Right cardiac atrium (tissue), 5 donors: ENCODE measurements at regions of chr18 and their contacts with region 1.

Region 1: GRCh38 chr18:35513181-35513936 is 15.6 kb upstream of the INO80C start:
- DNase-seq: peak; percentile 73 to 86 (median 77)
- ATAC-seq: peak; percentile 76 to 79
- H3K4me3 ChIP-seq: no peak overlapping the region
- H3K27ac ChIP-seq: no peak overlapping the region
- H3K4me1 ChIP-seq: peaks cover 4% of the 10 kb centered on the region
- H3K27me3 ChIP-seq: no peaks in the 10 kb centered on the region

Region 2: GRCh38 chr18:35355140-35355618 is 158.2 kb before region 1 on chr18:
- intact Hi-C with region 1: no loop called
- DNase-seq: peak; percentile 74 to 88 (median 81)
- ATAC-seq: peak; percentile 99
- H3K4me3 ChIP-seq: peak overlapping the region; percentile 27
- H3K27ac ChIP-seq: no peak overlapping the region
- H3K4me1 ChIP-seq: no peaks in the 10 kb centered on the region
- H3K27me3 ChIP-seq: no peaks in the 10 kb centered on the region

Region 3: DNA sequence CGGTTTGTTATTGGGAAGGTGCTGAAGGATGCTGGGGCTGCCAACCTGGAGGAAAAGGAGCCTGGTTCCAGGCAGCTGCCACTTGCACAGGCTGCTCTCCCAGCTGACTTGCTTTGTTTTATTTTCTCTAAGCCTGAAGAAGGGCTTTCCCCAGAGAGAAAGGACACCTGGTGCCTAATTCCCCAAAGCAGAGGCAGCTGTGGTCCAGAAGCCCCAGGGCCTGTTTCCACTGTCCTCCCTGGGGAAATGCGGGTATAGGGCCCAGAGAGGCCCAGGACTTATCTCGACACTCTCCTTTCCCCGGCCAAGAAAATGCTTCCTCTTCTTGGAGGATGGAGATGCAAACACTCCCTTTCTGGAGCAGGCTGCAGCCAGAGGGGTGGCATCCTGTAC is 45.7 kb before region 1 on chr18:
- intact Hi-C with region 1: loop called in 1 of 4 experiments (anchors 10 kb)
- DNase-seq: no peak
- ATAC-seq: no peak
- H3K4me3 ChIP-seq: no peak overlapping the region
- H3K27ac ChIP-seq: no peak overlapping the region
- H3K4me1 ChIP-seq: peaks cover 3% of the 10 kb centered on the region
- H3K27me3 ChIP-seq: no peaks in the 10 kb centered on the region

Region 4: GRCh38 chr18:35592298-35592697 is 78.9 kb after region 1 on chr18:
- intact Hi-C with region 1: no loop called
- DNase-seq: no peak
- ATAC-seq: no peak
- H3K4me3 ChIP-seq: no peak overlapping the region
- H3K27ac ChIP-seq: no peak overlapping the region
- H3K4me1 ChIP-seq: no peaks in the 10 kb centered on the region
- H3K27me3 ChIP-seq: no peaks in the 10 kb centered on the region